Activated CD4-positive, alpha-beta memory T cell treated with anti-CD3 and anti-CD28 coated beads, Interleukin-2, amount 10 ng/mL, durations not matched to agents 7 days and 5 days (primary cell): ENCODE measurements at regions of chr2 and their contacts with region 1.

Region 1: DNA sequence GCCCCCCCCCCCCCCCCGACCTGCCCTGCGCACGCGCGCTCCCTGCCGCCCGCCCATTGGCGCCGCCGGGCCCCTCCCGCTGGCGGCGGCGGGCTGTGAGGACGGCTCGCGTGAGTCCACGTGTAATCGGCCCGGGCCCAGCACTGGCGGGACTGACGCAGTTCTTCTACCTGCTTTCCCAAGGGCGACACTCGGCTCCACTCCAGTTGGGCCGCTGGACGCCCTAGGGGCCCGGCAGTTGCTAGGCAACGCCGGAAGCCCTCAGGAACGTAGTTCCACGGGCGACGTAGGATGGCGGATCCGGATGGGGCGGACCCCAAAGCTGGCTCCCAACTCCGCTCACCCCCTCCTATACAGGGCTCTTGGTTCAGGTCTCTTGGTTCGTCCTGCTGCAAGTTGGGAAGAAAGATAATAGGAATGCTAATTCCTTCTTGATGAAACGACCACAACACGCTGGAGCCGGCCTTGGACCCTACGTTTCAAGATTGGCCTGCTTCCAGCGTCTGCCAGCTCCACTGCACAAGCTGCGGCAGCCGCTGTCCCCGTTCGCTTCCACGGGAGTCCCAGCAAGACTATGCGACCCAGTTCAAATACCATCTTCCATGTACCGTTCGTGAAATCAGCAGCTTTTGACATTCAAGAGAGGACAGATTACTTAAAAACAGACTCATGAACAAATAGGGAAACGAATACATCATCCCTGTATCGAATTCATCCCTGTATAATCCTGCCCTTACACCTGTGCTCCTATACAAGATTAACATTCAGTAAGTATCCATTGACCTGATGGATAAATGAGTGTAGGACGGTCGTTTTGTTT is 415 bp upstream of the MCFD2 start:
- DNase-seq: peak; percentile 78
- H3K4me3 Mint-ChIP-seq: peak overlapping the region; percentile 94
- H3K27ac Mint-ChIP-seq: peak overlapping the region; percentile 3
- H3K4me1 Mint-ChIP-seq: peaks cover 47% of the 10 kb centered on the region
- H3K27me3 Mint-ChIP-seq: peaks cover 8% of the 10 kb centered on the region

Region 2: GRCh38 chr2:46876741-46877384 is 39.2 kb before region 1 on chr2:
- CTCF ChIA-PET with region 1: no interaction called
- POLR2A ChIA-PET with region 1: no interaction called
- DNase-seq: no peak
- H3K4me3 Mint-ChIP-seq: no peak overlapping the region
- H3K27ac Mint-ChIP-seq: no peak overlapping the region
- H3K4me1 Mint-ChIP-seq: no peaks in the 10 kb centered on the region
- H3K27me3 Mint-ChIP-seq: peaks cover 10% of the 10 kb centered on the region

Region 3: DNA sequence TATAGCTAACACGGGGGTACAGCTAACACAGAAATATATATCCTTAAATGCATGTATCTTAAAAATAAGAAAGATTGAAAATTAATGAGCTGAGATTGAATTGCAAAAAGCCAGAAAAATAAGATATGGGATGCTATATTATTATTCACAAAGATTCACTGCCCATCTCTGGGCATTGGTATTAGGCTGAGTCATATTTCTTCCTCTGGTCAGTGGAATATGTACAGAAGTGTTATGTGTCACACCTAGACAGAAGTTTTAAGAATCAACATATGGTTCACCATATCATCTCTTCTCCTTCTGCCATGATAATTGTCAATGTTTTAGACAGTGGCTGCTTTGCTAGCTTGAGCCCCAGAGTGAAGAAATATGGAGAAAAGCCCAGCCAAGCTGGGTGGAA is 13.6 kb after region 1 on chr2:
- CTCF ChIA-PET with region 1: interaction called, 26 read pairs
- POLR2A ChIA-PET with region 1: no interaction called
- DNase-seq: no peak
- H3K4me3 Mint-ChIP-seq: no peak overlapping the region
- H3K27ac Mint-ChIP-seq: no peak overlapping the region
- H3K4me1 Mint-ChIP-seq: no peaks in the 10 kb centered on the region
- H3K27me3 Mint-ChIP-seq: no peaks in the 10 kb centered on the region

Region 4: DNA sequence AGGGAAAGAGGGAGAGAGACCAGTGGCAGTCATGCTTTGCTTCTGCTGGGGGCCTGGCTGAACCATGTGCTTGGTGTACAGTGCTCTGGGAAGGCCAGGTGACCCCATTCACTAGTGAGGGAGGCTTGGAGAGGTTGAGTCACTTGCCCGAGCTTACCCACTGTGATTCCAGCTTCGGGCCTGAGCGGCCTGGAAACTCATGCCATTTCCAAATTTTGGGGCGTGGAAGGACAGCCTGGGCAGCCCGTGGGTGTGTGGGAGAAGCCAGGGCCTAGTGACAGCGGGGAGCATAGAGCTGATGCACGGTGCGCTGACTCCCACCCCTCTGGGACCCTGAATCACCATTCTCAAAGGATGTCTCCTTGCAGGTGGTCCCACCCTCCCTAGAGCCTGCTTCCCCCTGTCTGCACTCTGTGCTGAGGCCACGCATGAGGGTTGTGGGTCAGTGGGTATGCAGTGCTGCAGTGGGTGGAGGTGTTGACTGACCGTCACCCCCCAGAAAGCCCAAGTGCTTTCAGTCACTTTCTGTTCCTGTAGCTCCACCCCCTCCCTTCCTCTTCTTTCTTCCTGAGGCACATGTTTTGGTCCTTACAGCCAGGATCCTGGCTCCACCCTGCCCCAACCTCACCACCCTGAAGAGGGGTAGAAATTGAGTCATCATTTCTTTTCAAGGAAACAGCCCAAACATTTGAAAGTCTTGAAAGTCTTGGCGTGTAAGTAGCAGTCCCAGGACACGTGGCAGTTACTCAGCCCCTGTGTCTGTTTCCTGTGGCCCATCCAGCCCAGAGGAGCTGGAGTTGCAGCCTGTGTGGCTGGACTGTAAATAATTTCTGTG is 68.8 kb after region 1 on chr2:
- CTCF ChIA-PET with region 1: interaction called, 3 read pairs
- POLR2A ChIA-PET with region 1: interaction called, 10 read pairs
- DNase-seq: peak; percentile 77
- H3K4me3 Mint-ChIP-seq: peak overlapping the region; percentile 64
- H3K27ac Mint-ChIP-seq: peak overlapping the region; percentile 97
- H3K4me1 Mint-ChIP-seq: peaks cover 70% of the 10 kb centered on the region
- H3K27me3 Mint-ChIP-seq: no peaks in the 10 kb centered on the region